ENCODE measurements at regions of chr2 and their contacts with region 1.

Region 1: DNA sequence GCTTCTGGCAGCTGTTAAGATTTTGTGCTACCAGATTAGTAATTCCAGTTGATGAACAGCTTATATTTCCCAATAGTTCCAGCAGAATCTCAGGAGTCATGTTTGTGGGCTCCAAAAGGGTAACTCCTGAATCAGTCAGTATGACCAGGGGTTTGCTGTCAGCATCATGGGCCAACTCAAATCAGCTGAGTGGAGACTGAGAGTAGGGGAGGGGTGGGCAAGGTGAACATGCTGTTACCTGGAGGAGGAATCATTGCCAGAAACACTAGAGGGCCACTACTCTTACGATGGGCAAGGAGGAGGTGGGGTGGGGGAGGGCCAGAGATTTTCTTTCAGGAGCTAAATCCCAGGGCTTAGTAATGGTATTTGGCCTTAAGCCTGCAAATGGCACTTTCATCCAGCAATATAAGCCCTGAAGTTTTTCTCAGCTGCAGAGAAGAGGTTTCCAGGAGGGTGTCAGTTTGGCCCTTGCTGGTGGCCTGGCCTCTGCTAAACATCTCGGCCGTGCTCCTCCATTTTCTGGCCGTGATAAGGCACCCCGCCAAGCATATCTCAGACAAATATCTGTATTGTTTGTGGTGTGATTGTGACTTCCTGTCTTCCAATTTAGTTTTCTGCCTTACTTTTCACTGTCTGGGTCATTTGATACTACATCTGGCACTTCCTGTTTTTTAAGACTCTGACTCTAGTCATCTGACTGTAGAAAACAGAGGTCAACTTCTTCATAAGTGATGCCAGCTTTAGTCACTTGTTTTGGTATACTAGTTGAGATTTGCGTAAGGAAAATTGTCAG is 120.5 kb upstream of the CXCR4 start:
- DNase-seq: peak; percentile 31 to 87 (median 46)
- ATAC-seq: peak; percentile 80
- H3K4me3 ChIP-seq: no peak overlapping the region
- H3K4me3 Mint-ChIP-seq: peak overlapping the region; percentile 2
- H3K27ac ChIP-seq: peak overlapping the region; percentile 68 to 75
- H3K27ac Mint-ChIP-seq: peak overlapping the region; percentile 83
- H3K4me1 ChIP-seq: peaks cover 49% of the 10 kb centered on the region
- H3K4me1 Mint-ChIP-seq: peaks cover 58% of the 10 kb centered on the region
- H3K27me3 ChIP-seq: no peaks in the 10 kb centered on the region
- H3K27me3 Mint-ChIP-seq: no peaks in the 10 kb centered on the region
- CTCF ChIP-seq: no peak

Region 2: DNA sequence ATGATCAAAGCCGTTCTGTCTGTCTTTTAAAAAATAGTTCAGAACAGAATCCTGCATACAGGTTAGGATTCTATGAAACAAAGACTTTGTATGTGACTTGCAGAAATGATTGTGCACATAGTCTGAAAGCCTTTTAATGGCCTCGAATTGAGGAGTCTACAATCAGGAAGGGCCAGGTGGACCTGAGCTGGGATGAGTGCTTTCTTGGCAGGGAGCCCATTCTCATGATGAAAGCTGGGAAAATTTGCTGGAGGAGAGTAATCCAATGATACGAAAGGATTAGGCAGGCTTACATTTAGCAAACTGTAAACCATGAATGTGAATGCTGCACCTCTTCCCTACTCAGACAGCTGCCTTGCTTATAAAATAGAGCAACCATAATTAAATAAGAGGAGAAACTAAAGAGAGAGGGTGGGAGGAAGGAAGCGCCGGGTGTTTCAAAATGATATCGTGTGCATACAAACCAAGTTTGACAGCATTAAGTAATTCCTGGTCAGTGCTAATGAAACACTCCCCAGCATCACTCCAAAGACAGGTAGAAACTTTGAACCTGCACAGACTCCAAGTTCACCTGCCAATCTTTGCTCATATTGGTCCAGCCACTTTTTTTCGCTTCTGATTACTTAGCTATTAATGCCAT is 96.9 kb before region 1 on chr2:
- CTCF ChIA-PET with region 1: interaction called, 24 read pairs
- POLR2A ChIA-PET with region 1: interaction called, 49 read pairs
- intact Hi-C with region 1: loop called (anchors 2 to 5 kb)
- DNase-seq: no peak
- ATAC-seq: no peak
- H3K4me3 ChIP-seq: no peak overlapping the region
- H3K4me3 Mint-ChIP-seq: no peak overlapping the region
- H3K27ac ChIP-seq: no peak overlapping the region
- H3K27ac Mint-ChIP-seq: peak overlapping the region; percentile 97
- H3K4me1 ChIP-seq: peaks cover 47% of the 10 kb centered on the region
- H3K4me1 Mint-ChIP-seq: peaks cover 79% of the 10 kb centered on the region
- H3K27me3 ChIP-seq: no peaks in the 10 kb centered on the region
- H3K27me3 Mint-ChIP-seq: no peaks in the 10 kb centered on the region
- CTCF ChIP-seq: no peak

Region 3: GRCh38 chr2:136212423-136213378 is 25.8 kb before region 1 on chr2:
- CTCF ChIA-PET with region 1: no interaction called
- POLR2A ChIA-PET with region 1: interaction called, 10 read pairs
- intact Hi-C with region 1: loop called in 1 of 2 experiments (anchors 2 kb)
- DNase-seq: peak in 9 of 14 experiments; percentile 9 to 80 (median 19)
- ATAC-seq: peak; percentile 87
- H3K4me3 ChIP-seq: no peak overlapping the region
- H3K4me3 Mint-ChIP-seq: no peak overlapping the region
- H3K27ac ChIP-seq: peak overlapping the region; percentile 41 to 46
- H3K27ac Mint-ChIP-seq: peak overlapping the region; percentile 81
- H3K4me1 ChIP-seq: peaks cover 28% of the 10 kb centered on the region
- H3K4me1 Mint-ChIP-seq: peaks cover 46% of the 10 kb centered on the region
- H3K27me3 ChIP-seq: no peaks in the 10 kb centered on the region
- H3K27me3 Mint-ChIP-seq: no peaks in the 10 kb centered on the region
- CTCF ChIP-seq: no peak

Region 4: GRCh38 chr2:136281281-136282114 is 43.0 kb after region 1 on chr2:
- CTCF ChIA-PET with region 1: interaction called, 7 read pairs
- POLR2A ChIA-PET with region 1: interaction called, 5 read pairs
- intact Hi-C with region 1: loop called in 1 of 2 experiments (anchors 5 kb)
- DNase-seq: peak; percentile 16 to 92 (median 32)
- ATAC-seq: peak; percentile 78
- H3K4me3 ChIP-seq: no peak overlapping the region
- H3K4me3 Mint-ChIP-seq: peak overlapping the region; percentile 5
- H3K27ac ChIP-seq: peak overlapping the region; percentile 8 to 58
- H3K27ac Mint-ChIP-seq: peak overlapping the region; percentile 86
- H3K4me1 ChIP-seq: peaks cover 31% of the 10 kb centered on the region
- H3K4me1 Mint-ChIP-seq: peaks cover 40% of the 10 kb centered on the region
- H3K27me3 ChIP-seq: no peaks in the 10 kb centered on the region
- H3K27me3 Mint-ChIP-seq: no peaks in the 10 kb centered on the region
- CTCF ChIP-seq: no peak

Region 5: DNA sequence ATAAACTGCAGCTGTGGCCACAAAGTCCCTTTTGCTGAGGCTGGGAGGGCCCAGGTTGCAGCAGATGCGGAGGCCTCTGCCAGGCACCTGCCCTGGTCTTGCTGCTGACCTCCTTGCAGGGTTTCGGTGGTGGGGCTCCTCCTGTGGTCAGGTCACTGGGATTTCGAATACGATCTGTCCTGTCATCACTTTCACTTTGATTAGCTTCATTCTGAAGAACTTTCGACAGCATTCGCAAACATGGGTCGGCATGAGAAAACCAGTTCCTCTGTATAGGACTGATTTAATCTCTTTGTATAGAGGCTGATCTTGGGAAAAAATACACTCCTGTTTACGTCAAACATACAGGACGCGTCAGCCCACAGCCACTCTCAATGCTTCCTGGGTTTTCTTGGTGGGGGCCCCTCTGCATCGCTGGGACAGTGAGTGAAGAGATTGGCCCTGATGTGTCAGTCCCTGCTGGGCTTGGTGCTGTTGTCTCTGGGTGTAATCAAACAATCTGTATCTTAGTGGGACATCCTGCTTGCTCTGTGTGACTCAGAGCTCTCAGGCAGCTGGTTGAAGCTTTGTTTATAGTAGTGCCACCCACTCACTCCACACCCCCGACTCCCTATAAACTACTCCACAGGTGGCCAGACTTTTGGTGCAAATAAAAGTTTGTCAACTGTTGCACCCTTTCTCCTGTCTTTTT is 88.8 kb after region 1 on chr2:
- CTCF ChIA-PET with region 1: interaction called, 3 read pairs
- POLR2A ChIA-PET with region 1: interaction called, 6 read pairs
- intact Hi-C with region 1: loop called in 1 of 2 experiments (anchors 1 kb)
- DNase-seq: peak; percentile 64 to 93 (median 78)
- ATAC-seq: peak; percentile 92
- H3K4me3 ChIP-seq: peak overlapping the region; percentile 44
- H3K4me3 Mint-ChIP-seq: peak overlapping the region; percentile 79
- H3K27ac ChIP-seq: peak overlapping the region; percentile 74 to 90
- H3K27ac Mint-ChIP-seq: peak overlapping the region; percentile 90
- H3K4me1 ChIP-seq: peaks cover 54% of the 10 kb centered on the region
- H3K4me1 Mint-ChIP-seq: peaks cover 64% of the 10 kb centered on the region
- H3K27me3 ChIP-seq: no peaks in the 10 kb centered on the region
- H3K27me3 Mint-ChIP-seq: no peaks in the 10 kb centered on the region
- CTCF ChIP-seq: no peak

Region 6: DNA sequence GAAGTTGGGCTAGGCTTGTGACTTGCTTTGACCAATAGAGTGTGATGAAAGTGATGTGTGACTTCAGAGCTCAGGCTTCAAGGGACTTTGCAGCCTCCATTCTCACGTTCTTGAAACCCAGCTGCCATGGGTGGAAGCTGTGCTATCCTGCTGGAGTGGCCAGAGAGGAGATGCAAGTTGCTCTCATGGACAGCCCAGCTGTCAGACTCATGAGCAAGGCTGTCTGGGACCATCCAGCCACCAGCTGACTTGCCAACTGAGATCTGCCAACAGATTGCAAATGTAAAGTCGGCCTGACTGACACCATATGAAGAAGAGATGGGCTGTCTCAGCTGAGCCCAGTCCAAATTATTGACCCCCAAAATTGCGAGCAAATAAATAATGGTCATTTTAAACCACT is 105.9 kb after region 1 on chr2:
- CTCF ChIA-PET with region 1: no interaction called
- POLR2A ChIA-PET with region 1: no interaction called
- intact Hi-C with region 1: no loop called
- DNase-seq: no peak
- ATAC-seq: no peak
- H3K4me3 ChIP-seq: no peak overlapping the region
- H3K4me3 Mint-ChIP-seq: no peak overlapping the region
- H3K27ac ChIP-seq: no peak overlapping the region
- H3K27ac Mint-ChIP-seq: no peak overlapping the region
- H3K4me1 ChIP-seq: no peaks in the 10 kb centered on the region
- H3K4me1 Mint-ChIP-seq: no peaks in the 10 kb centered on the region
- H3K27me3 ChIP-seq: no peaks in the 10 kb centered on the region
- H3K27me3 Mint-ChIP-seq: no peaks in the 10 kb centered on the region
- CTCF ChIP-seq: no peak

Region 7: DNA sequence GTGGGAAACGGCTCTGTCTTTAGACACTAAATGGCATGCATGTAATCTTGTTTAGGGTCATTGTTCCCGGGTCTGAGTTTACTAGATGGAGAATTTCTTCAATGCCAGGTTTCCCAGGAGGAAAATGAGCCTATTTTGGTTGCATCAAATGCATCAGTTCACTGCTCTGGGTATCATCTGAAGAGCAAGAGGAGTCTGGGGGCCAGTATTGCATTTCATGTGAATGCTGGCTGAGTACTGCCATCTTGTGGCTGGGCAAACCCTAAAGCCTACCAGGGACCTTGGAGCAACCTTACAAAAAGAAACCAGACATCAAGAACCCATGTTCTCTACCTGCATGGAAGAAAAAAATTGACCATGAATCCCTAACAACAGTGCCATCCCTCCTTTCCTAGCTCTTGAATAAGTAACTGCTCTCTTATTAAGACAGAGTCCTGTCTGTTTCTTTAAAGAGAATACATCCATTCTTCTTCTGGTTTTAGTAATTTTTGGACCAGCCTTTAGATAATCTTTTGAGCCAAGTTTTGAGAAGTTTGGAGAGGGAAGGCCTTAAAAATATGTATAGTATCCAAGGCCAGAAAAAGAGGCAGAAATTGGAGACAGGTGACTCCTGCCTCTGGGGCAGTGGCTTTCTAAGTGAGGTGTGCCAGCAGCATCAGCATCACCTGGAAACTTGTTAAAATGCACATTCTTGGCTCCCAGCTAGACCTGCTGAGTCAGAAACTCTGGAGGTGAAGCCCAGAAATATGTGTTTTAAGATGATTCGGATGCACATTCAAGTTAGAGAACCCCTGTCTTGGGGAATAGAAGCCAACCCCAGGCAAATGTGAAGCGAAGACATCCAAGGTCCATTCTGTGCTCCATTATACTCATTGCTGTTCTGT is 140.5 kb after region 1 on chr2:
- CTCF ChIA-PET with region 1: interaction called, 15 read pairs
- POLR2A ChIA-PET with region 1: interaction called, 6 read pairs
- intact Hi-C with region 1: loop called in 1 of 2 experiments (anchors 1 kb)
- DNase-seq: peak; percentile 63 to 88 (median 76)
- ATAC-seq: peak; percentile 35
- H3K4me3 ChIP-seq: no peak overlapping the region
- H3K4me3 Mint-ChIP-seq: peak overlapping the region; percentile 31
- H3K27ac ChIP-seq: no peak overlapping the region
- H3K27ac Mint-ChIP-seq: peak overlapping the region; percentile 80
- H3K4me1 ChIP-seq: peaks cover 43% of the 10 kb centered on the region
- H3K4me1 Mint-ChIP-seq: peaks cover 72% of the 10 kb centered on the region
- H3K27me3 ChIP-seq: no peaks in the 10 kb centered on the region
- H3K27me3 Mint-ChIP-seq: no peaks in the 10 kb centered on the region
- CTCF ChIP-seq: peak; percentile 78

Measured in CD4-positive, alpha-beta T cell (primary cell).